ENCODE measurements at regions of chr6 and their contacts with region 1.

Region 1: DNA sequence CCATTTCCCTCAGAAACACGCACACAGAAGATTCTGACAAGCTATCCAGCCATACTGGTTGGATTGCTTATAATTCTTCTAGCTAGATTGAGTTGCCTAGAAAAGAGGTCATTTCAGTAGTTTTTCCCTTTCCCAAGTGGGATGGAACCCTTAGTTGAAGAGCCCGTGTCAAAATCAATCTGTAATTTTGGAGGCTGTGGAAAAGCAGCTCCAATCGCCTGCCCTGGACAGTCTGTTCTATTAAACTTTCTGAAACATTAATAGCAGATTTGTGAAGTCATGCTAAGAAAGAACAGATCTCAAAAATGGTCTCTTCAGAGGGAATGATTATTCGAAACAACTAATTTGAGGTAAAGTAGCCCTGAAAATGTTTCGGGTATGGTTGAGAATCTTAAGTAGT is 29.3 kb downstream of the TMEM200A start:
- DNase-seq: no peak
- H3K4me3 ChIP-seq: no peak overlapping the region
- CTCF ChIP-seq: no peak

Region 2: DNA sequence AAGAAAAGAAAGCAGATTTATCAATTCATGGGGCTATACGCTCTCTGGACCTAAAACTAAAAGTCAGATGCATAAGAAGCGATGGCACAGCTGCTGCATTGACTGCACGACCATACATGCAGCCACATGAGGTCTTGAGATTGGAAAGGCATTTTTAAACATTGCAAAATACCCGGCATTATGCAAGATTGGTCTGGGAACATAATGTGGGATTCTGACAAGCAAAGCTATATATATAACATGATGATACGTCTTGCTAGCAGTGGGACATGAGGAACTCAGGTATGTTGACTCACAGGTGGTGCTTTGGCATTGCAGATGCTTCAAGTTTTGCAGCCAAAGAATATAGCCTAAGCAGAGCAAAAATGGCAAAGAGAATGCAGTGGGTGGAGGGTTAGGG is 227.5 kb before region 1 on chr6:
- CTCF ChIA-PET with region 1: no interaction called
- POLR2A ChIA-PET with region 1: no interaction called
- DNase-seq: peak; percentile 23
- H3K4me3 ChIP-seq: no peak overlapping the region
- CTCF ChIP-seq: no peak

Region 3: GRCh38 chr6:130381459-130382380 is 13.4 kb before region 1 on chr6:
- CTCF ChIA-PET with region 1: interaction called, 11 read pairs
- POLR2A ChIA-PET with region 1: no interaction called
- DNase-seq: no peak
- H3K4me3 ChIP-seq: no peak overlapping the region
- CTCF ChIP-seq: no peak

Region 4: DNA sequence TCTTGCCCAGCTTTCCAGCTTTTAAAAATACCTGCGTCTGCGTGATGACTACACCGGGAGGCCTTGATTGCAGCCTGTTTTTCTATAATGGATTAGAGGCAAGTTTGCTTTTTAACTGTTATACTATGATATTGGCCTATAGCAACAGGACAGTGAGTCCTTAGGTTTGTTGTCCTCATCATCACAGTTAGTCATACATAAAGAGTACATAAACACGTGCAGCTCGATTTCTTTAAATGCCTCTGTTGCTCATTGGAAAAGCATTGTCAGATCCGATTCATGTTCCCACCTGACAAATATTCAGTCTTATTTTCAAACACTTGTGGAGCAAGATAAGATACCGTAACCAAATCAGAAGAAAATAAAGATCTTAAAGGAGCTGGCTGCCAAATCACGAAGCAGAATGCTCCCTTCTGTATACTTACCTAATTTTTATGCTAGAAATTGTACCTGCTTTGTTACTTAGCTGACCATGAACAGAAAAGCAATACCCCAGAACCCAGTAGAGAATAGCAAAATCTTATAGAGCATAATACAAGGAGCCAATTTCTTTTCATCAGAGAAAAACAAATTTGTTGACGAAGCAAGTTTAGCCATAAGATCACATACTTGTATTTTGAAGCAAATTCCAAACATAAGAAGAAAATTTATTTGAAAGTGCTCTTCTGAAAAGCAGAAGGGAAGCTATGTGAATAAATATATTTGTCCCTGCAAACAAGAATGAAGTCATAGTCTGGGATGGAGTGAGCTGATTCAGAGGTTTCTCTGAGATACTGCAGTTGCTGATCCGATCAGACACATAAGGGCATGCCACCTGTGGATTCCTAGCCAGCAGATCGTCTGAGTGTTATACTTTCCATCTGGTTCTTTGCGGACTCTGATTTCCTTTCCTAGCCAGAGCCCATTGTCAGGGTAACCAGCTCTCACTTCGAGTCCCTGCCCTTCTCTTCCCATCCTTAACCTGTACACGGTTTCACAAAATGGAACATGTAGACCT is 71.2 kb after region 1 on chr6:
- CTCF ChIA-PET with region 1: no interaction called
- POLR2A ChIA-PET with region 1: no interaction called
- DNase-seq: no peak
- H3K4me3 ChIP-seq: no peak overlapping the region
- CTCF ChIP-seq: no peak

Measured in AG04449 (cell line).